Posterior vena cava (tissue), 2 donors: ENCODE measurements at regions of chr11 and their contacts with region 1.

Region 1: GRCh38 chr11:132439711-132440255 is 1069.4 kb downstream of the NTM start:
- DNase-seq: no peak

Region 2: DNA sequence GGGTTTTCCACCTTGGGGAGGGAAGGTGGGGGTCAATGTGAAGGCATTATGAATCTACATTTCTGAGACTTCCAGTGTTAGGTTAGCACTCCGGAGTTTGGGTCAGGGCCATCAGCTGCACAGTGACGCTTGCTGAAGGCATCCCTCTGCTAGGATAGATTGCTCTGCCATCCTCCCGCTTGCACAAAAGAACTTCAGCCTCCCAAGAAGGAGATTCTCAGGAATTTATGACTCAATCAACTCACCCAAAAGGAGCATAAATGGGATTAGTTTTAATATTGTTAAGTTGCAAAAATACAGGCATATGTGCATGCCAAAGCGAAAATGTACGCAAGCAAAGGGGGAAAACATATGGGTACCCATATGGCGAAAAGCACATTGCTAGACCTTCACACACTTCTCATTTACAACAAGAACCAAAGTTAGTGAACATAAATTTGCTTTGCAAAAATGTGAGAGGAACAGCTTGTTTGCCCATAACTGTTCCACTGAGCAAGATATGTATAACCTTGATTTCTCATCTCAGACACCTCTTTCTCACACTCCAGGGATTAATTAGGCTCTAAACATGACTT is 79.5 kb after region 1 on chr11:
- intact Hi-C with region 1: loop called in 1 of 2 experiments (anchors 2 kb)
- DNase-seq: no peak

Region 3: GRCh38 chr11:132655187-132655855 is 215.5 kb after region 1 on chr11:
- intact Hi-C with region 1: no loop called
- DNase-seq: no peak

Region 4: GRCh38 chr11:132874638-132875037 is 434.9 kb after region 1 on chr11:
- intact Hi-C with region 1: no loop called
- DNase-seq: no peak

Region 5: GRCh38 chr11:133331031-133331430 is 891.2 kb after region 1 on chr11:
- intact Hi-C with region 1: loop called in 1 of 2 experiments (anchors 5 kb)
- DNase-seq: no peak